Esophagus squamous epithelium (tissue), 5 donors: ENCODE measurements at regions of chr12 and their contacts with region 1.

Region 1: GRCh38 chr12:131621701-131622421 is 89.0 kb upstream of the SFSWAP start:
- DNase-seq: no peak
- H3K4me3 ChIP-seq: no peak overlapping the region
- H3K27ac ChIP-seq: no peak overlapping the region
- H3K4me1 ChIP-seq: peaks cover 0 to 13% (median 4%) of the 10 kb centered on the region in 3 donors
- H3K27me3 ChIP-seq: peaks cover 0 to 63% (median 0%) of the 10 kb centered on the region in 4 donors
- CTCF ChIP-seq: no peak
- POLR2A ChIP-seq: no peak

Region 2: GRCh38 chr12:131340616-131341210 is 281.1 kb before region 1 on chr12:
- intact Hi-C with region 1: loop called (anchors 2 kb)
- DNase-seq: no peak
- H3K4me3 ChIP-seq: no peak overlapping the region
- H3K27ac ChIP-seq: no peak overlapping the region
- H3K4me1 ChIP-seq: no peaks in the 10 kb centered on the region
- H3K27me3 ChIP-seq: peaks cover 0 to 3% (median 0%) of the 10 kb centered on the region in 4 donors
- CTCF ChIP-seq: no peak
- POLR2A ChIP-seq: no peak

Region 3: DNA sequence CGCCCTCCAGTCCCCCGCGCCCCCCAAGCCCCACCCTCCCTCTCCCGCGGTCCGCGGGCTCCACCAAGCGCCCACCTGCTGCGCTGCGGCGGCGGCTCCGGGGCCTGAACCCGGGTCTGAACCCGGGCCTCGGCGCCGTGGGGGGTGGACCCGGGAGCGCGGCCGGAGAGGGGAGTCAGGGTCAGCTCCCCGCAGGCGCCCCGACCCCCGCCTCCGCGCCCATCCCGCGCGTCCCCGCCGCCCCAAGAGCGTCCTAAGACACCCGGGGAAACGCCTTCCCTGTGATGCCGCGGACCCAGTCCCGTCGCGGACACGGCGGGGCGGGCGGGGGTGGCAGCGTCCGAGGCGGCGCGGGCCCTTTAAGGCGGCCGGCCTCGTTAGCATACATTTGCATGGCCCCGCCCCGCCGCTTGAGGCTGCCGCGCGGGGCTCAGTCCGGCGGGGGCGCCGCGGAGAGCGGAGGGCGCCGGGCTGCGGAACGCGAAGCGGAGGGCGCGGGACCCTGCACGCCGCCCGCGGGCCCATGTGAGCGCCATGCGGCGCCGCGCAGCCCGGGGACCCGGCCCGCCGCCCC is 206.2 kb after region 1 on chr12 and contains the start of gene MMP17:
- intact Hi-C with region 1: loop called (anchors 10 kb)
- DNase-seq: no peak
- H3K4me3 ChIP-seq: peak within 1 kb of the TSS; percentile 36 to 67 (median 48)
- H3K27ac ChIP-seq: peak within 1 kb of the TSS in 2 of 4 donors; percentile 13 to 18
- H3K4me1 ChIP-seq: peaks cover 32 to 67% (median 43%) of the 10 kb centered on the region in 3 donors
- H3K27me3 ChIP-seq: peaks cover 0 to 87% (median 9%) of the 10 kb centered on the region in 4 donors
- CTCF ChIP-seq: no peak
- POLR2A ChIP-seq: peak in 1 of 4 donors; percentile 24
- total RNA-seq, gene MMP17: 1.3 to 3.1 (median 1.9) TPM